PC-3 (cell line): ENCODE measurements at regions of chr3 and their contacts with region 1.

Region 1: GRCh38 chr3:98593046-98593936 is at the start of gene CPOX:
- DNase-seq: peak; percentile 96
- ATAC-seq: peak; percentile 97
- H3K4me3 ChIP-seq: peak within 1 kb of the TSS; percentile 97
- H3K27ac ChIP-seq: peak within 1 kb of the TSS; percentile 15
- H3K4me1 ChIP-seq: peaks cover 12% of the 10 kb centered on the region
- H3K27me3 ChIP-seq: no peaks in the 10 kb centered on the region
- CTCF ChIP-seq: no peak
- total RNA-seq, gene CPOX: 62.0 and 86.2 TPM in 2 replicates

Region 2: DNA sequence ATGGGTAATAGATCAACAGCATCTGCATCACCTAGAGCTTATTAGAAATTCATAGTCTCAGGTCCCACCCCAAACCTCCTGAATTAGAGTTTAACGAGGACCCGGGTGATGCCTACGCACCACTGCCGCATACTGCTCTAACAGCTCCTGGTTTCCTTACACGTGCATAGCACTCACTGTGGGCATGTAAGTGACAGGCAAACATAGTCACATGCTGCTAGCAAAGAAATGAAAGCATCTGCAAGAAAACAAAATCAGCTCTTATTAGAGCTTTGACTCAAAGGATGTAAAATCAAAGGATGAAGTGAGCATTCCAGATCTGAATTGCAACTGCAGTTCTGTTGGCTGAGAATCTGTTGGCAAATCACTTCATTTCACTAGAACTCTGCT is 602.0 kb before region 1 on chr3:
- CTCF ChIA-PET with region 1: no interaction called
- POLR2A ChIA-PET with region 1: no interaction called
- intact Hi-C with region 1: no loop called
- DNase-seq: no peak
- ATAC-seq: no peak
- H3K4me3 ChIP-seq: no peak overlapping the region
- H3K27ac ChIP-seq: no peak overlapping the region
- H3K4me1 ChIP-seq: no peaks in the 10 kb centered on the region
- H3K27me3 ChIP-seq: peaks cover 3% of the 10 kb centered on the region; the same call in 1 of the 2 replicates
- CTCF ChIP-seq: no peak

Region 3: GRCh38 chr3:98522244-98523090 is 70.8 kb before region 1 on chr3 and contains the start of gene CLDND1:
- CTCF ChIA-PET with region 1: interaction called, 4 read pairs
- POLR2A ChIA-PET with region 1: no interaction called
- intact Hi-C with region 1: loop called (anchors 1 kb)
- DNase-seq: peak; percentile 99
- ATAC-seq: peak; percentile 95
- H3K4me3 ChIP-seq: peak within 1 kb of the TSS; percentile 79
- H3K27ac ChIP-seq: peak within 1 kb of the TSS; percentile 91
- H3K4me1 ChIP-seq: peaks cover 21% of the 10 kb centered on the region
- H3K27me3 ChIP-seq: no peaks in the 10 kb centered on the region
- CTCF ChIP-seq: no peak
- total RNA-seq, gene CLDND1: 76.4 and 81.1 TPM in 2 replicates

Region 4: GRCh38 chr3:98556164-98557130 is 36.8 kb before region 1 on chr3:
- CTCF ChIA-PET with region 1: no interaction called
- POLR2A ChIA-PET with region 1: no interaction called
- intact Hi-C with region 1: no loop called
- DNase-seq: no peak
- ATAC-seq: no peak
- H3K4me3 ChIP-seq: no peak overlapping the region
- H3K27ac ChIP-seq: no peak overlapping the region
- H3K4me1 ChIP-seq: 0 out of 2 replicates have a peak, but pooled peaks cover 5% of the 10 kb centered on the region
- H3K27me3 ChIP-seq: no peaks in the 10 kb centered on the region
- CTCF ChIP-seq: no peak

Region 5: GRCh38 chr3:98705706-98706105 is 112.4 kb after region 1 on chr3:
- CTCF ChIA-PET with region 1: interaction called, 3 read pairs
- POLR2A ChIA-PET with region 1: no interaction called
- intact Hi-C with region 1: loop called (anchors 1 kb)
- DNase-seq: peak; percentile 54
- ATAC-seq: peak; percentile 75
- H3K4me3 ChIP-seq: no peak overlapping the region
- H3K27ac ChIP-seq: no peak overlapping the region
- H3K4me1 ChIP-seq: 0 out of 2 replicates have a peak, but pooled peaks cover 5% of the 10 kb centered on the region
- H3K27me3 ChIP-seq: no peaks in the 10 kb centered on the region
- CTCF ChIP-seq: peak; percentile 66